Heart right ventricle (tissue), 16 donors: ENCODE measurements at regions of chr1 and their contacts with region 1.

Region 1: DNA sequence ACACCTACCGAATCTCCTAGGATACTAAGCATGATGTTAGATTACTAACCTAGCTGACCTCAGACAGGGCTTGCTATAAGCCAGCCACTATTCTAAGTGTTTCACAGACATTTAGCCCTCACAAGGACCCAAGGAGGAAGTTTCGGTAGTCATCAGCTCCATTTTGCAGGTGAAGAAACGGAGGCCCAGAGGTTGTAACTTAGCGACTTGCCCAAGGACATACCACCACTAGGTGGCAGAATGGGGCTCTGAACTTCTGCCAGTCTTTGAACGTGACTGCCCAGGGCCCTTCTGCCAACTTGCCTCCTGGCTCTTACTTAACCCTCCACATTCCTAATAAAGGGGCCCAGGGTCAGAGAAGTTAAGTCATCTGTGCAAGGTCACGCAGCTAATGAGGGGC is 283.5 kb downstream of the C1orf94 start:
- DNase-seq: no peak
- ATAC-seq: peak in 1 of 8 donors; percentile 42
- H3K4me3 ChIP-seq: no peak overlapping the region
- H3K27ac ChIP-seq: no peak overlapping the region
- H3K4me1 ChIP-seq: no peaks in the 10 kb centered on the region
- H3K27me3 ChIP-seq: peaks cover 0 to 31% (median 5%) of the 10 kb centered on the region in 7 donors
- CTCF ChIP-seq: peak in 7 of 9 donors; percentile 33 to 64 (median 44)

Region 2: GRCh38 chr1:33972676-33973395 is 487.4 kb before region 1 on chr1:
- intact Hi-C with region 1: no loop called
- DNase-seq: peak; percentile 62 to 77
- ATAC-seq: peak; percentile 75 to 97 (median 92)
- H3K4me3 ChIP-seq: no peak overlapping the region
- H3K27ac ChIP-seq: peak overlapping the region in 1 of 10 donors; percentile 40
- H3K4me1 ChIP-seq: peaks cover 7 to 40% (median 31%) of the 10 kb centered on the region in 9 donors
- H3K27me3 ChIP-seq: peaks cover 0 to 14% (median 0%) of the 10 kb centered on the region in 7 donors
- CTCF ChIP-seq: no peak

Region 3: DNA sequence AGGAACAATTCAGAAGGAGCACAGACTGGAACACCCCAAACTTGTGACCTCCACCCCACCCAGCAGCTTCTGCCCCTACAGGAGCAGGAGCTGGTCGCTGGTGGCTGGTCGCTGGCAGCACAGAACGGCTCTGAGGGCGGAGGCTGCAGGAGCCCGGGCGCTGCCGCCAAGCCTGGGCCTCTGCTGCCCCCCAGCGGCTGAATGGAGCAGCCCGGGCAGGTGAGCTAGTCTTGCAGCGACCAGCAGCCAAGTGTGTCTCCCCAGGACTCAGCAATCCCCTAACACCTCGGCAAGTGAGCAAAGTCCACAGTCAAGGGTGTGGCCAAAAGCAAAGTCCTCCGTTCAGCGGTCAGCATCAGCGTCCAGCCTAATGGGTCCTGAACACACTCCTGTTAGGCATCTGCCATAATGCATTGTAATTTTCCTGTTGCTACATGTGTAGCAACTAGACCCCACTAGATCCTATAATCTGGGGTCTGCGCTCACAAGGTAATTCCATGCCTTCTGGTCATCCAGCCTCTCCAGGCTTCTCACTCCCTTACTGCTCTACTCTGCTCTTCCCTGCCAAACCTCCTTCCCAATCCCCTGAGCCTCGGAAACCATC is 282.6 kb after region 1 on chr1:
- intact Hi-C with region 1: loop called in 5 of 10 experiments (anchors 5 to 10 kb)
- DNase-seq: peak; percentile 65 to 80
- ATAC-seq: peak; percentile 82 to 92 (median 88)
- H3K4me3 ChIP-seq: no peak overlapping the region
- H3K27ac ChIP-seq: no peak overlapping the region
- H3K4me1 ChIP-seq: peaks cover 0 to 4% (median 0%) of the 10 kb centered on the region in 9 donors
- H3K27me3 ChIP-seq: peaks cover 0 to 42% (median 23%) of the 10 kb centered on the region in 7 donors
- CTCF ChIP-seq: peak; percentile 89 to 97 (median 95)